Activated CD4-positive, alpha-beta T cell treated with anti-CD3 and anti-CD28 coated beads, Interleukin-2, amount 10 ng/mL, durations not matched to agents 24 days and 14 days (primary cell): ENCODE measurements at regions of chr18 and their contacts with region 1.

Region 1: DNA sequence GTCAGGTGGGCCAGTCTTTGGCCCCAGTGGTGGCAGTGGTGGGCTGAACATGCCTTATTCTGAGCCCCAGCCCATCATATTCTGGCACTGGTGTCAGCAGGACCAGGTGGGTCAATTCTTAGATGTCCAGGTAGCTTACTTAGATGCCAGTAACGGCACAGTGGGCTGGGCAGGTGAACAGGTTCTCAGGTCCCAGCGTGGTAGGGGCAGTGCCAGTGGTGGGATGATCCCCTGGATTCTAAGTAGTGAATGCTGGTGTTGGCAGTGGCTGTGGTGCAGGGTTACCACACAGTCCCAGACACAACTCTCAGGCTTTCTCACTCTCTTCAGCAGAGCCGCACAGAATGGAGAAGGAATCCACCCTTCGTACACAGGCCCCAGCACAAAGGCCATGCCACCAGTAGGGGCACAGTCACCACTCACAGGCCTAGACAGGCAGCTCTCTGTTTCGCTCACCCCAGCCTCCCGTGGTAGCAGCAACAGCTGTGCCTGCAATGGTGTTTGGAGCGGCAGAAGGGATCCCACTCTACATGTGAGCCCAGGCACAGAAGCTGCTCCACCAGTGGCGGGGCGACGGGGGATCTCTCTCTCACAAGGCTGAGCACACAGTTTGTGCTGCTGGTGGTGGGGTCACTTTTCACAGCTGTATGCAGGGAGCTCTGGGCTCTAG is 97.3 kb downstream of the ANKRD12 start:
- DNase-seq: no peak
- H3K4me3 Mint-ChIP-seq: no peak overlapping the region
- H3K27ac Mint-ChIP-seq: no peak overlapping the region
- H3K4me1 Mint-ChIP-seq: peaks cover 9% of the 10 kb centered on the region
- H3K27me3 Mint-ChIP-seq: no peaks in the 10 kb centered on the region

Region 2: DNA sequence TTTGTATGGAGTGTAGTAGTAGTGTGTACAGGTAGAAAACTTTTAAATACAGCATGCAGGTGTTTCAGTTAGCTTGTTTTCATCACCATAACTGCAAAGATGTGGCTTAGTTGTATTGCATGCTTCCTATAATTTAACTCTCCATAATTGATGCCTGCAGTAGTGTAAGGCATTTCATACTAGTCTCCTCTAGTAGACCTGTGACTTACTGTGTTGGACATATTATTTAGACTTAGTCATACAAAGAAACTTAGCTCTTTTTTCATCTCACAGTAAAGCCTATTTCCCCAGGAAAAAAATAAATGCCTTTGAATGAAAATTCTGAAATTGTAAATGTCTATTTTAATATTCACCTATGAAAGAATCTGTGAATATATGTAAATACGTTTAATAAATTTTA is 47.9 kb after region 1 on chr18:
- intact Hi-C with region 1: loop called (anchors 1 kb)
- DNase-seq: no peak
- H3K4me3 Mint-ChIP-seq: no peak overlapping the region
- H3K27ac Mint-ChIP-seq: no peak overlapping the region
- H3K4me1 Mint-ChIP-seq: no peaks in the 10 kb centered on the region
- H3K27me3 Mint-ChIP-seq: no peaks in the 10 kb centered on the region

Region 3: GRCh38 chr18:9292047-9292446 is 58.1 kb after region 1 on chr18:
- intact Hi-C with region 1: no loop called
- DNase-seq: no peak
- H3K4me3 Mint-ChIP-seq: no peak overlapping the region
- H3K27ac Mint-ChIP-seq: no peak overlapping the region
- H3K4me1 Mint-ChIP-seq: no peaks in the 10 kb centered on the region
- H3K27me3 Mint-ChIP-seq: no peaks in the 10 kb centered on the region